B cell (primary cell): ENCODE measurements at regions of chr12 and their contacts with region 1.

Region 1: GRCh38 chr12:49515266-49515665 is 23.6 kb upstream of the KCNH3 start:
- DNase-seq: no peak
- ATAC-seq: no peak
- H3K4me3 ChIP-seq: no peak overlapping the region
- H3K4me3 Mint-ChIP-seq: no peak overlapping the region
- H3K27ac ChIP-seq: no peak overlapping the region
- H3K27ac Mint-ChIP-seq: no peak overlapping the region
- H3K4me1 ChIP-seq: no peaks in the 10 kb centered on the region
- H3K4me1 Mint-ChIP-seq: no peaks in the 10 kb centered on the region
- H3K27me3 ChIP-seq: no peaks in the 10 kb centered on the region
- H3K27me3 Mint-ChIP-seq: no peaks in the 10 kb centered on the region
- CTCF ChIP-seq: no peak

Region 2: GRCh38 chr12:49296034-49296835 is 219.0 kb before region 1 on chr12:
- CTCF ChIA-PET with region 1: interaction called, 97 read pairs
- POLR2A ChIA-PET with region 1: no interaction called
- intact Hi-C with region 1: no loop called
- DNase-seq: peak; percentile 79
- ATAC-seq: peak; percentile 62
- H3K4me3 ChIP-seq: peak overlapping the region in 3 of 5 experiments; percentile 24 to 42 (median 29)
- H3K4me3 Mint-ChIP-seq: peak overlapping the region; percentile 79
- H3K27ac ChIP-seq: no peak overlapping the region
- H3K27ac Mint-ChIP-seq: no peak overlapping the region
- H3K4me1 ChIP-seq: peaks cover 30 to 40% of the 10 kb centered on the region in 2 donors
- H3K4me1 Mint-ChIP-seq: peaks cover 27% of the 10 kb centered on the region
- H3K27me3 ChIP-seq: peaks cover 0 to 67% (median 34%) of the 10 kb centered on the region in 4 experiments
- H3K27me3 Mint-ChIP-seq: peaks cover 48% of the 10 kb centered on the region
- CTCF ChIP-seq: peak; percentile 80

Region 3: GRCh38 chr12:49331380-49332222 is 183.7 kb before region 1 on chr12:
- CTCF ChIA-PET with region 1: interaction called, 42 read pairs
- POLR2A ChIA-PET with region 1: no interaction called
- intact Hi-C with region 1: no loop called
- DNase-seq: peak; percentile 37
- ATAC-seq: no peak
- H3K4me3 ChIP-seq: no peak overlapping the region
- H3K4me3 Mint-ChIP-seq: peak overlapping the region; percentile 29
- H3K27ac ChIP-seq: no peak overlapping the region
- H3K27ac Mint-ChIP-seq: no peak overlapping the region
- H3K4me1 ChIP-seq: peaks cover 19 to 23% of the 10 kb centered on the region in 2 donors
- H3K4me1 Mint-ChIP-seq: peaks cover 19% of the 10 kb centered on the region
- H3K27me3 ChIP-seq: peaks cover 0 to 51% (median 32%) of the 10 kb centered on the region in 4 experiments
- H3K27me3 Mint-ChIP-seq: peaks cover 38% of the 10 kb centered on the region
- CTCF ChIP-seq: peak; percentile 45

Region 4: GRCh38 chr12:49366652-49367380 is 148.4 kb before region 1 on chr12:
- CTCF ChIA-PET with region 1: interaction called, 729 read pairs
- POLR2A ChIA-PET with region 1: interaction called, 7 read pairs
- intact Hi-C with region 1: no loop called
- DNase-seq: peak; percentile 90
- ATAC-seq: peak; percentile 78
- H3K4me3 ChIP-seq: peak overlapping the region; percentile 61 to 96 (median 80)
- H3K4me3 Mint-ChIP-seq: peak overlapping the region; percentile 87
- H3K27ac ChIP-seq: peak overlapping the region; percentile 90 to 91
- H3K27ac Mint-ChIP-seq: peak overlapping the region; percentile 98
- H3K4me1 ChIP-seq: peaks cover 33 to 39% of the 10 kb centered on the region in 2 donors
- H3K4me1 Mint-ChIP-seq: peaks cover 46% of the 10 kb centered on the region
- H3K27me3 ChIP-seq: no peaks in the 10 kb centered on the region
- H3K27me3 Mint-ChIP-seq: no peaks in the 10 kb centered on the region
- CTCF ChIP-seq: peak; percentile 44

Region 5: DNA sequence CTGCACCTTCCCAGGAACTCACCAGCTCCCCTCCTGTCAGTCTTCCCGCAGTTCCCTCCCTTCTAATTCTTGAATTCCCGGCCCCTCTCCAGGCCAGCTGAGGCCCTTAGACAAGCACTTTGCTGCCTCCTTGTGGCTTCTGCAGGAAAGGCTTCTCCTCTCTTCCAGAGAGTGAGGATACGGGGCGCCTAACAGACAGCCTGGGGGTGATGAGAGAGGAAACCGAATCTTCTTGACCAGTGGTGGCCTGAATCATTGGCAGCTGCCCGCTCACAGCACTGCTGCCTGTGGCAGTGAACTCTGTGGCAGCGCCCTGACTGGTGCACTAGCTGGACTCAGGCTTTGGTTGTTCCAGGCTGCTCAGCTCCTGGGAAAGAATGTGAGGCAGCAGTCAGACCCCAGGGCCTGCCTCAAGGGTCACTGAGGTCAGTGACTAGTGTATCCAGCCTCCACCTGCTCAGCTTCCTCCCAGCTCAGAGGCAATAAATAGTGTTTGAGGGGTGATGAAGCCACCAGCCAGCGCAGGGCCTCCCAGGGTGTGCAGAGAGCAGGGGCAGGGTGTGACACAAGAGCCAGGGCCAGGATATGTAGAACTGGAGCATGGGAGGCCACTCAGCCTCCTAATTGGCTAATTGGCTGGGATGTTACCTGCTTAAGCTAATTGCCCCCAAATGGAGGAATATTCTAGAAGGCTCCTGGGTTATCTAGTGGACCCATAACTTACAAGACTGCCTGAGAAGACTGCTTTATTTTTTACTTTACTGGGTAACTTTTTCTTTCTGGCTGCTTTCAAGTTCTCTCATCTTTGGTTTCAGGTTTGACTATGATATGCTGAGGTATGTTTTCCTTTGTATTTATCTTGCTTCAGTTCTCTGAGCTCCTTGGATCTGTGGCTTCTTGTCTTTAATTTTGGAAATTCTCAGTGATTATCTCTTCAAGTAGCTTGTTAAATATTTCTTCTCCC is 65.6 kb after region 1 on chr12:
- CTCF ChIA-PET with region 1: interaction called, 11 read pairs
- POLR2A ChIA-PET with region 1: no interaction called
- intact Hi-C with region 1: no loop called
- DNase-seq: peak; percentile 60
- ATAC-seq: peak; percentile 61
- H3K4me3 ChIP-seq: no peak overlapping the region
- H3K4me3 Mint-ChIP-seq: no peak overlapping the region
- H3K27ac ChIP-seq: no peak overlapping the region
- H3K27ac Mint-ChIP-seq: no peak overlapping the region
- H3K4me1 ChIP-seq: no peaks in the 10 kb centered on the region
- H3K4me1 Mint-ChIP-seq: peaks cover 5% of the 10 kb centered on the region
- H3K27me3 ChIP-seq: no peaks in the 10 kb centered on the region
- H3K27me3 Mint-ChIP-seq: no peaks in the 10 kb centered on the region
- CTCF ChIP-seq: peak; percentile 70